CD8-positive, alpha-beta T cell (primary cell): ENCODE measurements at regions of chr7 and their contacts with region 1.

Region 1: DNA sequence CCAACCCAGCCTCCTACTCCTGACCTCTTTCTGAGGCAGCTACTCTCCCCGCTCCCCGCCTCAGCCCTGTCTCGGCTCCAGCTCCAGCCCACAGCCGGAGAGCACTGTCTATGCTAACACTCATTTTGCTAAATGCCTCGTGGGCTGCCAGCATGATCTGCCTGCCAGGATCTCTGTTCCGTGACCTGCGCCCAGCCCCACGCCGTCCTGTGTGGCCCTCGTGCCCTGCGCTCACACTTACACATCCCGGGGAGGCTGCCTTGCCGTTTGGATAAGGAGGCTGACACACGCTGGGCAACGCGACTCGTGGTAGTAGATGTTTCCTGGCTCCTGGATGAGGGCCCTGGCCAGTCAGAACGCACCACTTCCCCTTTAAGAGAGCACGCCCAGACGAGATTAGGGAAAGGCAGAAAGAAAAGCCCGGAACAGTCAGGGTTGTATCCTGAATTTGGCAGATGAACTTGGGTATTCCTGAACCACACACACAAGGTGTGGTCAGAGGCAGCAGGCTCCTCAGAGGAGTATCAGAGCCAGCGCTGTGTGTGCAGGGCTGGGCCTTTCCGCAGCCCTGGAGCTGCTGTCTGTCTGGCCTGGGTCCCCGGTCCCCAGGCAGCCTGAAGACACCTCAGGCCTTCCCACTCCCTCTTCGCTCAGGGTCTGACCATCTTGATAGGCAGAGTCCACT is 97.7 kb upstream of the EFCAB10 start:
- DNase-seq: peak in 1 of 9 experiments; percentile 26
- ATAC-seq: no peak
- H3K4me3 ChIP-seq: no peak overlapping the region
- H3K4me3 Mint-ChIP-seq: peak overlapping the region; percentile 33
- H3K27ac ChIP-seq: peak overlapping the region in 1 of 2 experiments; percentile 80
- H3K27ac Mint-ChIP-seq: peak overlapping the region; percentile 84
- H3K4me1 ChIP-seq: peaks cover 39% of the 10 kb centered on the region
- H3K4me1 Mint-ChIP-seq: peaks cover 70% of the 10 kb centered on the region
- H3K27me3 ChIP-seq: no peaks in the 10 kb centered on the region
- H3K27me3 Mint-ChIP-seq: no peaks in the 10 kb centered on the region
- CTCF ChIP-seq: no peak

Region 2: GRCh38 chr7:104943502-104944343 is 735.2 kb before region 1 on chr7:
- CTCF ChIA-PET with region 1: no interaction called
- POLR2A ChIA-PET with region 1: no interaction called
- intact Hi-C with region 1: loop called in 1 of 2 experiments (anchors 10 kb)
- DNase-seq: peak; percentile 40 to 86 (median 69)
- ATAC-seq: peak; percentile 24
- H3K4me3 ChIP-seq: peak overlapping the region; percentile 10 to 18
- H3K4me3 Mint-ChIP-seq: peak overlapping the region; percentile 83
- H3K27ac ChIP-seq: peak overlapping the region; percentile 98
- H3K27ac Mint-ChIP-seq: peak overlapping the region; percentile 100
- H3K4me1 ChIP-seq: peaks cover 52% of the 10 kb centered on the region
- H3K4me1 Mint-ChIP-seq: peaks cover 64% of the 10 kb centered on the region
- H3K27me3 ChIP-seq: no peaks in the 10 kb centered on the region
- H3K27me3 Mint-ChIP-seq: no peaks in the 10 kb centered on the region
- CTCF ChIP-seq: no peak

Region 3: DNA sequence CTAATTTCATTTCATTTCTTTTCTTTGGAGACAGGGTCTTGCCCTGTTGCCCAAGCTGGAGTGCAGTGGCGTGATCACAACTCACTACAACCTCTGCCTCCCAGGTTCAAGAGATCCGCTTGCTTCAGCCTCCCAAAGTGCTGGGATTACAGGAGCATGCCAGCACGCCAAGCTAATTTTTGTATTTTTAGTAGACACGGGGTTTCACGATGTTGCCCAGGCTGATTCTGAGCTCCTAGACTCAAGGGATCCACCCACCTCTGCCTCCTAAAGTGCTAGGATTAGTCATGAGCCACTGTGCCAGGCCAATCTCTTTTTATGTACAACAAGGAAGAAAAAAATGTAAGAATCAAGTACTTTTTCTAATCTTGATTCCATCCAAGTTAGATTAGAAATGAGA is 675.7 kb before region 1 on chr7:
- CTCF ChIA-PET with region 1: no interaction called
- POLR2A ChIA-PET with region 1: no interaction called
- intact Hi-C with region 1: no loop called
- DNase-seq: peak in 4 of 9 experiments; percentile 49 to 63 (median 54)
- ATAC-seq: peak; percentile 84
- H3K4me3 ChIP-seq: no peak overlapping the region
- H3K4me3 Mint-ChIP-seq: peak overlapping the region; percentile 71
- H3K27ac ChIP-seq: peak overlapping the region in 1 of 2 experiments; percentile 65
- H3K27ac Mint-ChIP-seq: peak overlapping the region; percentile 91
- H3K4me1 ChIP-seq: peaks cover 79% of the 10 kb centered on the region
- H3K4me1 Mint-ChIP-seq: peaks cover 85% of the 10 kb centered on the region
- H3K27me3 ChIP-seq: no peaks in the 10 kb centered on the region
- H3K27me3 Mint-ChIP-seq: no peaks in the 10 kb centered on the region
- CTCF ChIP-seq: no peak

Region 4: DNA sequence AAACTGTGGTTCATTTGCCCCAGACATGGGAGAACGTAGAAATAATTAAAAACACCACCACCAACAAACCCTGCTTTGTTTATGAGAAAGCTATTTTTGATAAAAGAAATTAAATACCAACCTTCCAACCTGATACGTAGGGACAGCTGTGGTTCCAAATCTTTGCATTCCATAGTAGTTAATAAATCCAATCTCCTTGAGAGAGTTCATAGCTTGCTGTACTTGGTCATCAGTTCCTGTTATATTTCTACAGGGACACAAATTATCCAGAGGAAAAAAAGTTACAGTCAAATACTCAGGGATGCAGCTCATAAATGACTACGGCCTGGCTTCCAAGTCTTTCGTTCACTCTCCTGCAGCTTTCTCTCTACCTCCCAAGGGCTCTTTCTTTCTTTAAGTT is 198.0 kb before region 1 on chr7:
- CTCF ChIA-PET with region 1: no interaction called
- POLR2A ChIA-PET with region 1: no interaction called
- intact Hi-C with region 1: no loop called
- DNase-seq: no peak
- ATAC-seq: no peak
- H3K4me3 ChIP-seq: no peak overlapping the region
- H3K4me3 Mint-ChIP-seq: no peak overlapping the region
- H3K27ac ChIP-seq: no peak overlapping the region
- H3K27ac Mint-ChIP-seq: no peak overlapping the region
- H3K4me1 ChIP-seq: no peaks in the 10 kb centered on the region
- H3K4me1 Mint-ChIP-seq: no peaks in the 10 kb centered on the region
- H3K27me3 ChIP-seq: no peaks in the 10 kb centered on the region
- H3K27me3 Mint-ChIP-seq: no peaks in the 10 kb centered on the region
- CTCF ChIP-seq: no peak

Region 5: GRCh38 chr7:105611856-105612775 is 66.8 kb before region 1 on chr7:
- CTCF ChIA-PET with region 1: no interaction called
- POLR2A ChIA-PET with region 1: no interaction called
- intact Hi-C with region 1: no loop called
- DNase-seq: no peak
- ATAC-seq: no peak
- H3K4me3 ChIP-seq: no peak overlapping the region
- H3K4me3 Mint-ChIP-seq: no peak overlapping the region
- H3K27ac ChIP-seq: no peak overlapping the region
- H3K27ac Mint-ChIP-seq: no peak overlapping the region
- H3K4me1 ChIP-seq: no peaks in the 10 kb centered on the region
- H3K4me1 Mint-ChIP-seq: no peaks in the 10 kb centered on the region
- H3K27me3 ChIP-seq: no peaks in the 10 kb centered on the region
- H3K27me3 Mint-ChIP-seq: no peaks in the 10 kb centered on the region
- CTCF ChIP-seq: no peak

Region 6: GRCh38 chr7:105691733-105692564 is 13.0 kb after region 1 on chr7:
- CTCF ChIA-PET with region 1: interaction called, 5 read pairs
- POLR2A ChIA-PET with region 1: interaction called, 11 read pairs
- intact Hi-C with region 1: loop called (anchors 1 to 2 kb)
- DNase-seq: peak; percentile 45 to 91 (median 71)
- ATAC-seq: peak; percentile 75
- H3K4me3 ChIP-seq: peak overlapping the region; percentile 69 to 72
- H3K4me3 Mint-ChIP-seq: peak overlapping the region; percentile 93
- H3K27ac ChIP-seq: peak overlapping the region; percentile 85 to 96
- H3K27ac Mint-ChIP-seq: peak overlapping the region; percentile 98
- H3K4me1 ChIP-seq: peaks cover 34% of the 10 kb centered on the region
- H3K4me1 Mint-ChIP-seq: peaks cover 64% of the 10 kb centered on the region
- H3K27me3 ChIP-seq: no peaks in the 10 kb centered on the region
- H3K27me3 Mint-ChIP-seq: no peaks in the 10 kb centered on the region
- CTCF ChIP-seq: no peak

Region 7: DNA sequence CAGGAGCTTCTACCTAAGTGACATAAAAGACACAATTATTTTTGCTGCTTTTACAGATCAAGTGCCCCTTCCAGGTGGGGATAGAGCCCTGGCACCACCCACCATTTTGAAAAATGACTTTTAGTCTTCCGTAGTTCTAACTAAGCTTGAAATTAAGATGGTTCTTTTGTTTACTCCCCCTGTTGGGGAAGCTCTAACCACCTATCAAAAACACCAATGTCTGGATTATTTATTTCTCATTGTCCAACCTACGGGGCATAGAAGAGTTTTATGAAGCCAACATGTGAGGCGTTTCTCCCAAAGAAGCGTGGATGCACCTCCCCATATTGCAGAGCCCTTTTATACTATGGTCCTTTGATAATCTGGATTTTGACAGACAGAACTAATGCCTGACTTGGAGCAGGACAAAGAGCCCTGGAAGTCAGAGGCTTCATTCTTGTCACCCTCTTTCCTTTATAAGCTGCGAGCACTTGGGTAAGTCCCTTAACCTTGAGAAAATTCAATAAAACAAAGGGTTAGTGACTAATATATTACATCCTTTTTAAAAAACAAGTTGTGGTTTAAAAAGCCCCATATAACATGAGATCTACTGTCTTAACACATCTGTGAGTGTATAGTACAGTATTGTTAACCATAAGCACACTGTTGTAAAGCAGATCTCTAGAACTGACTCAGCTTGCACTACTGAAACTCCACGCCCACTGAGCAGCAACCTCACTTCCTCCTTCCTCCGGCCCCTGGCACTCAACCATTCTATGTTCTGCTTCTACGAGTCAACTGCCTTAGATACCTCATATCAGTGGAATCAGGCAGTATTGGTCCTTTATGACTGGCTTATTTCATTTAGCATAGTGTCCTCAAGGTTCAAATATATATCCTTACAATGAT is 130.0 kb after region 1 on chr7:
- CTCF ChIA-PET with region 1: no interaction called
- POLR2A ChIA-PET with region 1: no interaction called
- intact Hi-C with region 1: loop called in 1 of 2 experiments (anchors 5 kb)
- DNase-seq: peak; percentile 19 to 90 (median 71)
- ATAC-seq: peak; percentile 90
- H3K4me3 ChIP-seq: peak overlapping the region in 1 of 2 experiments; percentile 6
- H3K4me3 Mint-ChIP-seq: no peak overlapping the region
- H3K27ac ChIP-seq: peak overlapping the region; percentile 23 to 87
- H3K27ac Mint-ChIP-seq: peak overlapping the region; percentile 24
- H3K4me1 ChIP-seq: peaks cover 36% of the 10 kb centered on the region
- H3K4me1 Mint-ChIP-seq: peaks cover 58% of the 10 kb centered on the region
- H3K27me3 ChIP-seq: no peaks in the 10 kb centered on the region
- H3K27me3 Mint-ChIP-seq: no peaks in the 10 kb centered on the region
- CTCF ChIP-seq: no peak

Region 8: DNA sequence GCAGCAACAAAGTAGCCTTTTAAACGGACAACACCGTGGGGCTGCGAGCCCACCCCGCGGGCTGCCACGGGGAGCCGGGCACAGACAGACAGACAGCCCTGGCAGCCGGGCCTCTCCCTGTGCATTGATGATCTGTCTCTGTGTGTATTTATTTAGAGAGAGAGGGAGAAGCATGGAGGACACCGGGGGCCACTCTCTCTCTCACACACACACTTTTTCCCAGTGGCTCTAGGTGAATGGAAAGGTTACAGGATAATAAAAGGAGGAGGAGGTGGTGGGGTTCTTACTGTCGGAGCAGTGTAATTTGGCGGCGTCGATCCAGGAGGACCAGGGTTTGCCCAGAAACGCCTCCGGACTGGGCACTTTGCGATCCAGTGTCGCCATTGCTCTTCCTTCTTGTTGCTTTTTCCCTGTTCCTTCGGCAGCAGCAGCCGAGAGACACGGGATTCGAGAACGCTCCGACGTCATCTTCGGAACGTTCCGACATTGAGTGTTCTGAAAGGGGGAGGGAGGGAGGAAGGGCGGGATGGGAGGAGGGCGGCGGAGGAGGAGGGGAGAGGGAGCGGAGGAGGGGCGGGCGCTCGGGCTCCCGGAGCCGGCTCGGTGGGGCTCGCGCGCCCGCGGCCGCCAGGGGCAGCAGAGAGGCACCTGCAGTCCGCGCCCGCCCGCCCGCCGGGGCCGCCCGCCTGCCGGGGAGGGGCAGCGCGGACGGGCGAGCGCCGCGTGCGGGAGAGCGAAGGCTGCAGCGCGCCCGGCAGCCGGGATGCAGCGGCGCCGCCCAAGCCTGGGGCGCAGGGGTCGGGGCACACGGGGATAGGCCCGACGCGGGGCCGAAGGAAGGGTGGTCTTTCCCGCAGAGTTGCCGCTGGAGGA is 197.4 kb after region 1 on chr7 and contains the start of gene ATXN7L1:
- CTCF ChIA-PET with region 1: no interaction called
- POLR2A ChIA-PET with region 1: no interaction called
- intact Hi-C with region 1: no loop called
- DNase-seq: peak; percentile 81 to 94 (median 89)
- ATAC-seq: peak; percentile 94
- H3K4me3 ChIP-seq: peak within 1 kb of the TSS; percentile 76 to 98
- H3K4me3 Mint-ChIP-seq: peak within 1 kb of the TSS; percentile 97
- H3K27ac ChIP-seq: peak within 1 kb of the TSS; percentile 53 to 78
- H3K27ac Mint-ChIP-seq: peak within 1 kb of the TSS; percentile 96
- H3K4me1 ChIP-seq: peaks cover 37% of the 10 kb centered on the region
- H3K4me1 Mint-ChIP-seq: peaks cover 61% of the 10 kb centered on the region
- H3K27me3 ChIP-seq: no peaks in the 10 kb centered on the region
- H3K27me3 Mint-ChIP-seq: no peaks in the 10 kb centered on the region
- CTCF ChIP-seq: peak; percentile 29
- total RNA-seq, gene ATXN7L1: 17.0 to 18.5 TPM